Activated CD4-positive, alpha-beta memory T cell treated with anti-CD3 and anti-CD28 coated beads for 36 hours (primary cell): ENCODE measurements at regions of chr4 and their contacts with region 1.

Region 1: DNA sequence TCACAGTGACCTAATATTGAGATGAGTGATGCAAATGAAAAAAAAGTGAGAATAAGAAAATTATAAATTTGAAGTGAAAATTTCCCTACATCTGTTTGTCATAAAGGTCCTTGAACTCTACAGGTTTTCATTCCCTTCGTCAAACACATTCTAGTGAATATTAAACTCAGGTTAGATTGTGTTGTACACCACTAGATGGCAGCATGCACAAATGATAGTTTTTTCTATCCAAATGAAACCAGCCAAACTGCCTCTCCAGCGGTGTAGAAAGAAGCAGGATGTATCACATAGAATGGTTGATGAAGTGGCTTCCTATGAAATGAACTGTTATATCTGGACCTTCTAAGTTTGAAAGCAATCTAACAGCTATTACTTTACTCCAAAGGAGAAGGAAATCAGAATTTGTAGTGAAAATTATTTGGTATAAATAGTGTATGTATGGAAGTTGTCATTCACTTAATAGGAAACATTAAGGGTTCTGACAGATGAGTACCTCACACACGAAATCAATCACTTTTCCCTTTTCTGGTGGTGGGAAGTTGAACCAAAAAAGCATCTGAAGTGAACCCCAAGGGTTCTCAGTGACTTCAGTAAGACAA is 382.7 kb downstream of the UNC5C start:
- DNase-seq: peak; percentile 22
- H3K4me3 Mint-ChIP-seq: no peak overlapping the region
- H3K27ac Mint-ChIP-seq: no peak overlapping the region
- H3K4me1 Mint-ChIP-seq: no peaks in the 10 kb centered on the region
- H3K27me3 Mint-ChIP-seq: no peaks in the 10 kb centered on the region

Region 2: DNA sequence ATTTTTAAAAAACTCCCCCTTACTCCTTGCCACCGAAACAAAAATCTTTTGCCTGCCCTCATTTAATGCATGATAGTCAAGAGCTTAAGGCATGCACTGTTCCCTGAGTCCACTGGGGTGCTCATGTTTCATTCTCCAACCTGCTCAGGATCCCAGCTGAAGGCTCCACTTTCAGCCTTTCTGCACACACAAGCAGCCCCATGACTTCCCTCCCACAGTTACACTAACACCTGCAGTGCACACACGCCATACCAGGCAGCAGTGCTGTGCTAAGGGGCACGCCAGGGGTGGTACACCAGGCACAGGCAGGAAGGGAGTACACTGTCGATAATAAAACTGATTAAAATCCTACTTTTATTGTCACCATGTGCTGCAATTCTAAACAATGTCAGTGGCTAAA is 23.1 kb before region 1 on chr4:
- CTCF ChIA-PET with region 1: no interaction called
- POLR2A ChIA-PET with region 1: no interaction called
- intact Hi-C with region 1: no loop called
- DNase-seq: no peak
- H3K4me3 Mint-ChIP-seq: no peak overlapping the region
- H3K27ac Mint-ChIP-seq: no peak overlapping the region
- H3K4me1 Mint-ChIP-seq: no peaks in the 10 kb centered on the region
- H3K27me3 Mint-ChIP-seq: peaks cover 18% of the 10 kb centered on the region

Region 3: GRCh38 chr4:95248720-95249425 is 82.8 kb after region 1 on chr4:
- CTCF ChIA-PET with region 1: interaction called, 3 read pairs
- POLR2A ChIA-PET with region 1: no interaction called
- intact Hi-C with region 1: loop called (anchors 1 kb)
- DNase-seq: peak; percentile 19
- H3K4me3 Mint-ChIP-seq: no peak overlapping the region
- H3K27ac Mint-ChIP-seq: peak overlapping the region; percentile 75
- H3K4me1 Mint-ChIP-seq: peaks cover 22% of the 10 kb centered on the region
- H3K27me3 Mint-ChIP-seq: peaks cover 1% of the 10 kb centered on the region

Region 4: GRCh38 chr4:95267081-95267480 is 101.1 kb after region 1 on chr4:
- CTCF ChIA-PET with region 1: no interaction called
- POLR2A ChIA-PET with region 1: no interaction called
- intact Hi-C with region 1: loop called (anchors 5 kb)
- DNase-seq: no peak
- H3K4me3 Mint-ChIP-seq: no peak overlapping the region
- H3K27ac Mint-ChIP-seq: no peak overlapping the region
- H3K4me1 Mint-ChIP-seq: no peaks in the 10 kb centered on the region
- H3K27me3 Mint-ChIP-seq: no peaks in the 10 kb centered on the region

Region 5: GRCh38 chr4:95510145-95510544 is 344.1 kb after region 1 on chr4:
- CTCF ChIA-PET with region 1: no interaction called
- POLR2A ChIA-PET with region 1: no interaction called
- intact Hi-C with region 1: loop called (anchors 5 kb)
- DNase-seq: no peak
- H3K4me3 Mint-ChIP-seq: no peak overlapping the region
- H3K27ac Mint-ChIP-seq: no peak overlapping the region
- H3K4me1 Mint-ChIP-seq: peaks cover 5% of the 10 kb centered on the region
- H3K27me3 Mint-ChIP-seq: peaks cover 3% of the 10 kb centered on the region

Region 6: GRCh38 chr4:96035727-96036126 is 869.7 kb after region 1 on chr4:
- CTCF ChIA-PET with region 1: no interaction called
- POLR2A ChIA-PET with region 1: no interaction called
- intact Hi-C with region 1: loop called (anchors 5 kb)
- DNase-seq: no peak
- H3K4me3 Mint-ChIP-seq: no peak overlapping the region
- H3K27ac Mint-ChIP-seq: no peak overlapping the region
- H3K4me1 Mint-ChIP-seq: no peaks in the 10 kb centered on the region
- H3K27me3 Mint-ChIP-seq: no peaks in the 10 kb centered on the region

Region 7: DNA sequence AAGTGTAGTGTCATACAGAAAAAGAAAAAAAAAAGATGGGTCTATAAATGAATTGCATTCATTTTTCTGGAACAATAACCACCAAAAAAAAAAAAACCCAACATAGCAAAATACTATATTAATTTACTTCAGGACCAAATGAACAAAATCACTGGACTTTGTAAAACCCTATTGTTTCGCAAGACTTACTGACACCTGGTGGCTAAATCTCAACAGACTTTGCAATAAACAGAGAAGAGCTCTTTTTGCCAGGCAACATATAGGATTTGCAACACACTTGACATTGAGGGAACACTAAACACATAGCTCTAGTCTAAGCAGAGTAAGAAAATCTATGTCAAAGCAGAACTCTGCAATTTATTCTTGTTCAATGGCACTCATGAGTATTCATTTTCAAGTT is 1987.0 kb after region 1 on chr4:
- CTCF ChIA-PET with region 1: no interaction called
- POLR2A ChIA-PET with region 1: no interaction called
- intact Hi-C with region 1: loop called (anchors 10 kb)
- DNase-seq: no peak
- H3K4me3 Mint-ChIP-seq: no peak overlapping the region
- H3K27ac Mint-ChIP-seq: no peak overlapping the region
- H3K4me1 Mint-ChIP-seq: no peaks in the 10 kb centered on the region
- H3K27me3 Mint-ChIP-seq: no peaks in the 10 kb centered on the region